PC-3 (cell line): ENCODE measurements at regions of chr7 and their contacts with region 1.

Region 1: GRCh38 chr7:104923010-104923421 is 91.0 kb upstream of the KMT2E start:
- DNase-seq: peak; percentile 86
- ATAC-seq: peak; percentile 96
- H3K4me3 ChIP-seq: no peak overlapping the region
- H3K27ac ChIP-seq: no peak overlapping the region
- H3K4me1 ChIP-seq: no peaks in the 10 kb centered on the region
- H3K27me3 ChIP-seq: no peaks in the 10 kb centered on the region
- CTCF ChIP-seq: peak; percentile 89

Region 2: GRCh38 chr7:104156842-104157277 is 766.2 kb before region 1 on chr7:
- CTCF ChIA-PET with region 1: no interaction called
- POLR2A ChIA-PET with region 1: no interaction called
- intact Hi-C with region 1: loop called (anchors 5 kb)
- DNase-seq: peak; percentile 61
- ATAC-seq: 0 out of 2 replicates have a peak, but pooled peaks have one; percentile 45
- H3K4me3 ChIP-seq: no peak overlapping the region
- H3K27ac ChIP-seq: no peak overlapping the region
- H3K4me1 ChIP-seq: no peaks in the 10 kb centered on the region
- H3K27me3 ChIP-seq: no peaks in the 10 kb centered on the region
- CTCF ChIP-seq: peak; percentile 84

Region 3: GRCh38 chr7:104272767-104273384 is 650.1 kb before region 1 on chr7:
- CTCF ChIA-PET with region 1: no interaction called
- POLR2A ChIA-PET with region 1: no interaction called
- intact Hi-C with region 1: loop called (anchors 2 kb)
- DNase-seq: peak; percentile 56
- ATAC-seq: no peak; the same call in 1 of the 2 replicates
- H3K4me3 ChIP-seq: no peak overlapping the region
- H3K27ac ChIP-seq: no peak overlapping the region
- H3K4me1 ChIP-seq: no peaks in the 10 kb centered on the region
- H3K27me3 ChIP-seq: no peaks in the 10 kb centered on the region; the same call in 1 of the 2 replicates
- CTCF ChIP-seq: peak; percentile 75

Region 4: DNA sequence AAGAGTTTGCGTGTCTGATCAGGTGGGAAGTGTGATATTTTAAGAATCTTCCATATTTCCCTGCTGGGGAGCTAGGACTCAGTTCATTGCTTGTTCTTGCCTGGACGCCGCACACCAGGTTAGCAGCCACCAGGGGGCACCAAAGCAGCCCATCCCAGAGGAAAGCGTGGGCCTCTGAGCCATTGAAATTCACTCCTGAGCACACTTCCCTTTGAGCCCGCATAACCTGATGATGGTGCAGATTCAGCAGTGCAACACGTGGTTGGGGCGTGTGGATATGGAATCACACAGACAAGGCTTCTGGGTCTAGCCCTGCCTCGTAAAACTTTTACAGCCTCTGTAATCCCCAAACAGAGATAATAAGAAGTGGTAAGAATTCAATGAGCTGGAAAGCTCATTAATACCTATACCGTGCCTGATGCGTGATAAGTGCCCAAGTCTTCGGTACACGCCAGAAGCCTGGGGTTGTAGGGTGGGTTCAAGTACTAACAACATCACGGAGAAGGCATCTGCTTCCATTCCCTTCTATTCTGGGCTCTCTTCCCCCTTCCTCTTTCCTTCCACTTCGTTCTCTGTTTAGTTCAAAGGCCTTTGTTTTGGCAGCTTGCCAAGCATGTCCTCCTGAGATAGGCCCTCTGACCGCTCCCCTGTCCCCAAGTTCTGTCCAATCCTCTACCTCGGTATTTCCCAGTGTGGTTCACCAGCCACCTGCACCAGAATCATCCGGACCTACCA is 39.1 kb before region 1 on chr7:
- CTCF ChIA-PET with region 1: interaction called, 20 read pairs
- POLR2A ChIA-PET with region 1: no interaction called
- intact Hi-C with region 1: loop called (anchors 1 kb)
- DNase-seq: peak; percentile 78
- ATAC-seq: peak; percentile 98
- H3K4me3 ChIP-seq: no peak overlapping the region
- H3K27ac ChIP-seq: no peak overlapping the region
- H3K4me1 ChIP-seq: no peaks in the 10 kb centered on the region
- H3K27me3 ChIP-seq: peaks cover 6% of the 10 kb centered on the region; the same call in 1 of the 2 replicates
- CTCF ChIP-seq: peak; percentile 91

Region 5: GRCh38 chr7:105036217-105037168 is 113.5 kb after region 1 on chr7:
- CTCF ChIA-PET with region 1: no interaction called
- POLR2A ChIA-PET with region 1: no interaction called
- intact Hi-C with region 1: loop called (anchors 5 kb)
- DNase-seq: no peak
- ATAC-seq: no peak
- H3K4me3 ChIP-seq: no peak overlapping the region
- H3K27ac ChIP-seq: no peak overlapping the region
- H3K4me1 ChIP-seq: peaks cover 4% of the 10 kb centered on the region; the same call in 1 of the 2 replicates
- H3K27me3 ChIP-seq: no peaks in the 10 kb centered on the region
- CTCF ChIP-seq: no peak

Region 6: GRCh38 chr7:105336009-105336408 is 413.0 kb after region 1 on chr7:
- CTCF ChIA-PET with region 1: no interaction called
- POLR2A ChIA-PET with region 1: no interaction called
- intact Hi-C with region 1: loop called (anchors 5 kb)
- DNase-seq: peak; percentile 47
- ATAC-seq: no peak
- H3K4me3 ChIP-seq: no peak overlapping the region
- H3K27ac ChIP-seq: no peak overlapping the region
- H3K4me1 ChIP-seq: peaks cover 7% of the 10 kb centered on the region; the same call in 1 of the 2 replicates
- H3K27me3 ChIP-seq: no peaks in the 10 kb centered on the region
- CTCF ChIP-seq: peak; percentile 57; the same call in 1 of the 2 replicates

Region 7: DNA sequence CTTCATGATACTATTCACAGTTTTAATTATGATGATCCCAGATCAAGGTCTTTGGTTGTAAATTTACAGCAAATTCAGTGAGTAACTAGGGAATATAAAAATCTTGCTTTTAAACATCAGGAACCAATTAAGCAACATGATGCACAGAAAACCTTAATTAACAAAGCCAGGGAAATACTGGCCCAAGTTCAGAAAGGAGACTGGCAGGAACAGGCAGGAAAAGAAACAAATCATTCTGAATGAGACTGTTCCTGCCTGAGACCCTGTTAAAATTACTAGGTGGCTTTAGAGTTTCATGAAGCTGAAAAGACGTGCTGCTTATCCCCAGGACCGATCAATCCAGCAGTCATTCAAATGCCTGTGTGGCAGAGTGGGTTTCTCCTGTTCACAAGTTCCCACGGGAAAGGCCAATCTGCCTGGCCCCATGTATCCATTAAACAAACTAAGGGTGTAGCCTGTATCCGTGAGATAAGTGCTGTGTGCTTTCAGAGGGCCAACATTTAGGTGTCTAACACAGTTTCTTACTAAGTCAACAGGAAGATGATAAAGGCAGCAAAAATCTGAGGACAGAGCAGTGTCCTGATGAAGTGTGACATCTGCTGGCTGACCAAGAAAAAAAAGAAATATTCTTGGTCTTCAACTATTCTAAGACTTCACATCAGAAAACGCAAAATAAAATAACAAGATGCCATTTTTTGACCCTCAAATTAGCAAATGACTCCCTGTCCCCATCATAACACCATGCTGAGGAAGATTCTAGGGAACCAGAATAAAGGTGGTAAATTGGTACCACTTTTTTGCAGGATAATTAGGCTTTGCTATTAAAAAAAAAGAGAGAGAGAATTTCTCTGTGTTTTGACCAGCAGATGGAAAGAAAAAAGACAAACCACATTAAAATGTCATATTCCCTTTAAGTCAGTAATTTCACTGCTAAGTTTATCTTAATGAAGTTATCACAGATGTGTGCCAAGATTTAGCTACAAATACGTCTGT is 564.9 kb after region 1 on chr7:
- CTCF ChIA-PET with region 1: no interaction called
- POLR2A ChIA-PET with region 1: no interaction called
- intact Hi-C with region 1: loop called (anchors 1 kb)
- DNase-seq: peak; percentile 58
- ATAC-seq: peak; percentile 99
- H3K4me3 ChIP-seq: no peak overlapping the region
- H3K27ac ChIP-seq: peak overlapping the region; percentile 71
- H3K4me1 ChIP-seq: peaks cover 9% of the 10 kb centered on the region
- H3K27me3 ChIP-seq: no peaks in the 10 kb centered on the region
- CTCF ChIP-seq: peak; percentile 66